Common myeloid progenitor, CD34-positive (primary cell): ENCODE measurements at regions of chr9 and their contacts with region 1.

Region 1: DNA sequence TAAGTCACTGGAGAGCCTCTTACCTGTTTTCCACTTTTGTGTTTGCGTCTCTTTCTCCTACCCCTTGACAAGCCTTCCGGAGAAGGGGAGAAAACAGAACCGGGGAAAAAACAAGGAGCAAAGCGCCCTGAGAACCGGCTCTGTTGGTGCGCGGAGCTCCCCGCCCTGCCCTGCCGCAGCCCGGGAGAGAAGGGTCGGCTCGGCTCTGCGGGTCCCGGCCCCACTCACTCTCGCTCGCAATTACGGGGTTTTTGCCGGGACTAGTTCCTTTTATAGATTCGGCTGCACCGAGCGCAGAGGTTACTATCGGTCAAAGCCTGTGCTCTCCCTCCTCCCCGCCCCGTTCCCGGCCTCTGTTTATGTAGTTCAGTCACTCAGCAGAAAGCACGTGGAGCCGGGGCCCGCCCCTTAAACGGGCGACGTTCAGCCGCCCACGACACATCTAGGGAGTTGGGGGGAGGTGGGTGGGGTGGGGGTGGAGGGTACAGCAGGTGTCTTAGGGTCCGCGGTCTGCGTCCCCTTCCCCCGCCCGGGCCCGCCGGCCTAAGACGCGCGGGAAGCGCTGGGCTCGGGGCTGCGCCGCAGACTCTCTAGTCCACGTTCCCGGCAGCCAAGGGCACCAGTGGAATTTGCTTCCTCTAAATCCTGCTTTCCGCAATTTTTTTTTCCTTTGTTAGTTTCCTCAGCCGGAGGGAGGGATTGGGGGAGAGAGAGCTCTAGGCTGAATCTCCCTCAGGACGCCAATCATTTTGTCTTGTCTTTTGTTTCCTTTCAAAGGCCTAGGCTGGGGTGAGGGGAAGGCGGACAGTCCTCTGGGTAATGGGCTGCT is at the start of gene ABCA1:
- DNase-seq: peak; percentile 87 to 95 (median 93)
- H3K4me3 ChIP-seq: peak within 1 kb of the TSS; percentile 29 to 91 (median 74)
- H3K27ac ChIP-seq: no peak within 1 kb of the TSS
- H3K4me1 ChIP-seq: peaks cover 0 to 26% (median 25%) of the 10 kb centered on the region in 4 experiments
- H3K27me3 ChIP-seq: no peaks in the 10 kb centered on the region

Region 2: GRCh38 chr9:104863180-104863883 is 64.8 kb before region 1 on chr9:
- CTCF ChIA-PET with region 1: interaction called, 20 read pairs
- POLR2A ChIA-PET with region 1: no interaction called
- DNase-seq: peak; percentile 73 to 80 (median 78)
- H3K4me3 ChIP-seq: no peak overlapping the region
- H3K27ac ChIP-seq: no peak overlapping the region
- H3K4me1 ChIP-seq: peaks cover 15 to 44% (median 32%) of the 10 kb centered on the region in 4 experiments
- H3K27me3 ChIP-seq: no peaks in the 10 kb centered on the region

Region 3: DNA sequence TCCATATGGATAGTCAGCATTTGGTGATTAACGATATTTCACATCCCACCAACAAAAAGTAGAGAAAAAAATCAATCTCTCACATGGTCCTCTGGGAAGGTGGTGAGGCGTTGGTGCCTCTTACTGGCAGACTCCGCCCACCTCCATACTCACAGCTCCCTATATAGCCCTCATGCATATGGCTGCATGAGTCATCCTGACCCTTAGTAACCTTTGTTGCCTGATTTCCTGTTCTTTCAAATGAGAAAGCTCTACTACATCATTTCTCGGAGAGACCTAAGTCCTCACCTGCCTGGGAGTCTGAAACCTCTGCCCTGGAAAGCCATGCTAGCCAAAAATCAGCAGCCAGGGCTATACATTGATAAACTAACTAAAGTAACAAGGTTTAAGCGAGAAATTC is 33.1 kb after region 1 on chr9:
- CTCF ChIA-PET with region 1: interaction called, 12 read pairs
- POLR2A ChIA-PET with region 1: interaction called, 3 read pairs
- DNase-seq: peak; percentile 52 to 85 (median 80)
- H3K4me3 ChIP-seq: no peak overlapping the region
- H3K27ac ChIP-seq: no peak overlapping the region
- H3K4me1 ChIP-seq: peaks cover 0 to 15% (median 6%) of the 10 kb centered on the region in 4 experiments
- H3K27me3 ChIP-seq: no peaks in the 10 kb centered on the region

Region 4: GRCh38 chr9:104968025-104968982 is 40.2 kb after region 1 on chr9:
- CTCF ChIA-PET with region 1: interaction called, 34 read pairs
- POLR2A ChIA-PET with region 1: interaction called, 10 read pairs
- DNase-seq: peak; percentile 82 to 92 (median 91)
- H3K4me3 ChIP-seq: peak overlapping the region; percentile 64 to 92 (median 80)
- H3K27ac ChIP-seq: peak overlapping the region; percentile 54 to 55
- H3K4me1 ChIP-seq: peaks cover 2 to 20% (median 16%) of the 10 kb centered on the region in 4 experiments
- H3K27me3 ChIP-seq: peaks cover 0 to 1% (median 0%) of the 10 kb centered on the region in 5 experiments

Region 5: GRCh38 chr9:104991144-104991953 is 63.2 kb after region 1 on chr9:
- CTCF ChIA-PET with region 1: interaction called, 5 read pairs
- POLR2A ChIA-PET with region 1: interaction called, 19 read pairs
- DNase-seq: peak; percentile 88 to 97 (median 96)
- H3K4me3 ChIP-seq: peak overlapping the region; percentile 17 to 88 (median 75)
- H3K27ac ChIP-seq: peak overlapping the region; percentile 56 to 60
- H3K4me1 ChIP-seq: peaks cover 16 to 42% (median 40%) of the 10 kb centered on the region in 4 experiments
- H3K27me3 ChIP-seq: no peaks in the 10 kb centered on the region

Region 6: DNA sequence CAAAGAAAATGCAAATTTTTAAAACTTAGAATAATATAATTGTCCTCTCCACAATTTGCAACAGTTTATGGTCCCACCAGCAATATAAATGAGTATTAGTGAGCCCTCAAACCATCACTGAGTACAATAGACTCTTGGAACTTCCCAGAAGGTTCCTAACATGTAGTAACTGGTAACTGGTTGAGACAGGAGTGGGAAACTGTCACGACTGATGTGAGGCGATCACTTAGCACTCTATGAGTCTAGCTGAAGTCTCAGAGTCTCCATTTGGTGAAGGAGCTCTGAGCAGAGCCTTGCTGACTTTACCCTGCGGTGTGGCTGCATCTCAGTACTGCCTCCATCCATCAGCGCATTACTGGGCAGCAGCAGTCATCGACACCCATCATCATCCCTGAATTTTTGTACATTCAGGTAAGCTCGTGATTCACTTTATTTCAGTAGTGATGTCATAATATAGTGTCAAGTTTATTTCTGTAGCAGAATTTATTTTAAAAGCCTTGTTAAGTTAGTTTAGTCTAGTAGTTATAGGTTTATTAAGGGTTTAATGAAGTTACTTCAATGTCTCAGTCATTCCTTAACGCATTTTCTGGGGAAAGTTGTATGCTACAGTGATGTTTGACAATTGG is 76.5 kb after region 1 on chr9:
- CTCF ChIA-PET with region 1: no interaction called
- POLR2A ChIA-PET with region 1: no interaction called
- DNase-seq: no peak
- H3K4me3 ChIP-seq: no peak overlapping the region
- H3K27ac ChIP-seq: no peak overlapping the region
- H3K4me1 ChIP-seq: peaks cover 15 to 24% (median 19%) of the 10 kb centered on the region in 4 experiments
- H3K27me3 ChIP-seq: no peaks in the 10 kb centered on the region

Region 7: DNA sequence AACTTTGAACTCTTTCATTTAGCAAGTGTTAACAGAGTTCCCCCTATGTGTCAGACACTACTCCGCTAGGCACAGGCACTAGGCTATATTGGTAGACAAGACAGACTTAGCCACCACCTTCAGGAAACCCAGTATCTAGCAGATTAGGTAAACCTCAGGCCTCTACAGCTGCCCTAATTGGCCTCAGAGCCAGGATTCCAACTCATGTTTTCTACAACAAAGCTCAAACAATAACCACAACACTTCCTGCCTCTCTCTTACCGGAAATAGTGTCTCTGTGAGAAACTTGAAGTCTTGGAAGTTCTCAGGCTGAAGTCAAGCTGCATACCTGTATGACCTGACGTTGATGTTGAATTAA is 199.7 kb after region 1 on chr9:
- CTCF ChIA-PET with region 1: interaction called, 11 read pairs
- POLR2A ChIA-PET with region 1: interaction called, 11 read pairs
- DNase-seq: peak; percentile 91 to 97 (median 95)
- H3K4me3 ChIP-seq: peak overlapping the region in 3 of 7 experiments; percentile 39 to 45 (median 45)
- H3K27ac ChIP-seq: no peak overlapping the region
- H3K4me1 ChIP-seq: peaks cover 5 to 33% (median 33%) of the 10 kb centered on the region in 4 experiments
- H3K27me3 ChIP-seq: peaks cover 0 to 2% (median 0%) of the 10 kb centered on the region in 5 experiments

Region 8: DNA sequence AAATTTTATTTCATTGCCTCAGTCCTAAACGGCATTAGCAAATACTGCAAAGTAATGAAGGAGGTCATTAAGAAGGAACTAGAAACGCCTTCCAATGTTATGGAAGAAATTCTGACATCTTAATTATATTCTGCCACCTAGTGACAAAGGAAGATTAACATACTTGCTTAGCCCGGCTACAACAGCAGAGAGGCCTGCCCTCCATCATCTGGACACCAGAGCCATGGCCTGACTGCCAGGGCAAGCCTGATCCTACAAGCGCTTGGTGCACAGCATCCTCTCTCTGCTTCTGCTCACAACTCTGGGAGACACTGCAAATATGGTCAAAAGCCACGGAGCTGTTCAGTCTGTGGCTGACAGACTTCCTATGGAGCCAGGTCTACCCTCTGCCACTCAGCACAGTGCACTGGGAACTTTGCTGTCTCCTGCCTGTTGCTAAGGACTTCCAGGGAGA is 229.0 kb after region 1 on chr9:
- CTCF ChIA-PET with region 1: interaction called, 21 read pairs
- POLR2A ChIA-PET with region 1: no interaction called
- DNase-seq: peak; percentile 63 to 74 (median 72)
- H3K4me3 ChIP-seq: no peak overlapping the region
- H3K27ac ChIP-seq: no peak overlapping the region
- H3K4me1 ChIP-seq: peaks cover 4 to 11% (median 8%) of the 10 kb centered on the region in 4 experiments
- H3K27me3 ChIP-seq: no peaks in the 10 kb centered on the region